ENCODE measurements at regions of chr10 and their contacts with region 1.

Region 1: DNA sequence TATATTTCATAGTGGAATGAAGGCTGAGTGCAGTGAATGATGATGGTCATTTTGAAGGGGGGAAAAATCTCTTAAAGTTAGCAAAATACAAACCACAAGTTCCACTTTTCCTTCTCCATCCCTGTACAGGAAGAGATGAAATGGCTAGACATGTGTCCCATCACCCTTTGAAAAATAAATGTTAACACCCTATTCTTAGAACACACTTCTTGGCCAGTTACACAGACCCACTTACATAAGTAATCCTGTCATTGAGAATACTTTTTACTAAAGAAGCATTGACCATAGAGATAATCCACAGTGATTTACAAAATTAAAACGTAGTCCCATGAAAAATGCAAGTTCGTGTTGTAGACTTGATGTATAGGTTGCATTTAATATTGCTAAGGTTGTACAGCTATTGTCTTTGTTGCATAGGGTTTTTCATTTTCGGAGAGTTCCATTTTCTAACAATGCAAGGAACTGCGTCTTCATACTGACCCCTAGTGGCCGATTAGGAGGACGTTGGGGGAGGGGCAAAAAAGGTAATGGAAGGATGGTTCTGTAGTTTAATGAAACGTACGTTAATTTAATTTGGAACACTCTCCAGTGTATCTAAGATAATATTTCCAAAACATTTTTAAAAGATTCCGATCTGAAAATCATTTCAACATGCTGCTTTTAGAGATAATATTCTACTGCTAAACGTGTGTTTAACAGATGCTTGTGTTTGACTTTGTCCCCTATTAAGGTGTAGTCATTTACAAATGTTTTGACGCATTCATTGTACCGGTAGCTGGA is 60.9 kb downstream of the ARMC3 start:
- DNase-seq: peak; percentile 76
- H3K4me3 ChIP-seq: no peak overlapping the region
- H3K27ac ChIP-seq: no peak overlapping the region
- H3K4me1 ChIP-seq: peaks cover 5% of the 10 kb centered on the region
- H3K27me3 ChIP-seq: no peaks in the 10 kb centered on the region
- CTCF ChIP-seq: peak; percentile 92

Region 2: DNA sequence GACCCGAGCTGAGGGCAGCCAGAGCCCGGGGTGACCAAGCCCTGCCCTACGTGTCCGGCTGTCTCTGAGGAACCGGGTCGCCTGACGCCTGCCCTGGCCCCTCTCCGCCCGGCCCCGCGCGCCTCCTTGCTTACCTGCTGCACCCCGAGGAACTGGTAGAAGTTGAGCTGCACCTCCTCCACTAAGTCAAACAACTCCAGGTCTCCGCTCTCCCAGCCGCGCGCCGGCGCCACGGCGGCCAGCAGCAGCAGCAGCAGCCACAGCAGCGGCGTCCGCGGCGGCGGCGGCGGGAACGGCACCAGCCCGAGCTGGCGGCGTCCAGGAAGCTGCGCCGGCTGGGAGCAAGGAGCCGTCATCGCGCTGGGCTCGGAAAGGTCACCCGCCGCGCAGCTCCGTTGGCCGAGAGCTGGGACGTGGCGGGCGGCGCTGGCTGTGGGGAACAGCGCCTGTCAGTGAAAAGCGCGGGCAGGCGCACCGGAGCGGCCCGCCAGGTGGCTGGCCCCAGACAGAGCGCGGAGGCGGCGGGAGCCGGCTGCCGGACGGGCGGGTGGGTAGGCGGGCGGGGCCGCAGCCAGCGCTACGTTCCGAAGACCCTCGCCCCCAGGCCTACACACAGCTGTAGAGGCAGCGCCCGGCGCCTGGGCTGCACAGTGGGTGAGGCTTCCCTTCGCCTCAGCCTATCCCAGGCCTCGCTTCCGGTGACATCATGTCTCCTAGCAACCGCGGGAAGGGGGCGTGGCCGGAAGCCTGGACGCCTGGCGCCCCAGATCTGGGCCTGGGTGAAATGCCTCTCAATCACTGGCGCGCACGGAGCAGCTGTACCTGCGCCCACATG is 985.5 kb before region 1 on chr10 and contains the start of gene DNAJC1:
- CTCF ChIA-PET with region 1: no interaction called
- POLR2A ChIA-PET with region 1: no interaction called
- intact Hi-C with region 1: loop called (anchors 5 kb)
- DNase-seq: peak; percentile 98
- H3K4me3 ChIP-seq: peak within 1 kb of the TSS; percentile 88
- H3K27ac ChIP-seq: peak within 1 kb of the TSS; percentile 85
- H3K4me1 ChIP-seq: peaks cover 16% of the 10 kb centered on the region
- H3K27me3 ChIP-seq: no peaks in the 10 kb centered on the region
- CTCF ChIP-seq: no peak; the same call in 1 of the 2 replicates
- total RNA-seq, gene DNAJC1: 17.4 and 21.2 TPM in 2 replicates

Region 3: DNA sequence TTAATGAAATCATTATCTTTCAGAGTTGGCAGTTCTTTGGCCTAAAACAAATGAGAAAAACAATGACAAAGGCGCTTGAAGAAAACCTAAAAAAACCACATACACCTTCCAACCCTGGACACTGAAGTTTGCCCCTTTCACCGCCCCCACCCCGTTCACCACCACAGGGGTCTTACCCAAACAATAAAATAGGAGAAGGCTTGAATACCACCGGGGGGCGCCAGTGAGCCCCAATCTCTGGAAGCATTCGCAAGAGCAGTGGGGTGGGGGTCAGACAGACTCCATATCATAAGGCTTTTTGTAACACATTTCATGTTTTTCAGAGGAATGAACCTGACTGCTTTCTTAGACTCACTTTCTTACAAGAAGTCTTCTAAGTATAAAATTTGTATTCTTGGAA is 438.0 kb before region 1 on chr10:
- CTCF ChIA-PET with region 1: no interaction called
- POLR2A ChIA-PET with region 1: no interaction called
- intact Hi-C with region 1: loop called (anchors 2 kb)
- DNase-seq: peak; percentile 71
- H3K4me3 ChIP-seq: no peak overlapping the region
- H3K27ac ChIP-seq: no peak overlapping the region
- H3K4me1 ChIP-seq: no peaks in the 10 kb centered on the region
- H3K27me3 ChIP-seq: no peaks in the 10 kb centered on the region
- CTCF ChIP-seq: peak; percentile 79

Region 4: GRCh38 chr10:22714479-22715289 is 274.1 kb before region 1 on chr10 and contains the start of gene PIP4K2A:
- CTCF ChIA-PET with region 1: no interaction called
- POLR2A ChIA-PET with region 1: interaction called, 10 read pairs
- intact Hi-C with region 1: no loop called
- DNase-seq: peak; percentile 85
- H3K4me3 ChIP-seq: peak within 1 kb of the TSS; percentile 90
- H3K27ac ChIP-seq: peak within 1 kb of the TSS; percentile 66
- H3K4me1 ChIP-seq: peaks cover 10% of the 10 kb centered on the region
- H3K27me3 ChIP-seq: no peaks in the 10 kb centered on the region
- CTCF ChIP-seq: no peak
- total RNA-seq, gene PIP4K2A: 18.3 and 19.8 TPM in 2 replicates

Region 5: GRCh38 chr10:23927576-23928325 is 939.0 kb after region 1 on chr10:
- CTCF ChIA-PET with region 1: no interaction called
- POLR2A ChIA-PET with region 1: no interaction called
- intact Hi-C with region 1: no loop called
- DNase-seq: peak; percentile 52
- H3K4me3 ChIP-seq: no peak overlapping the region
- H3K27ac ChIP-seq: no peak overlapping the region
- H3K4me1 ChIP-seq: peaks cover 4% of the 10 kb centered on the region
- H3K27me3 ChIP-seq: no peaks in the 10 kb centered on the region
- CTCF ChIP-seq: no peak

Measured in A673 (cell line).